Dorsolateral prefrontal cortex (tissue), 120 donors: ENCODE measurements at regions of chr10 and their contacts with region 1.

Region 1: GRCh38 chr10:121598207-121598862 is at the start of gene FGFR2:
- DNase-seq: peak; percentile 18 to 85 (median 66)
- H3K4me3 ChIP-seq: peak within 1 kb of the TSS; percentile 49 to 88 (median 75)
- H3K27ac ChIP-seq: peak within 1 kb of the TSS; percentile 83 to 99 (median 96)
- H3K27me3 ChIP-seq: peaks cover 0 to 24% (median 2%) of the 10 kb centered on the region in 45 donors
- CTCF ChIP-seq: peak in 37 of 56 donors; percentile 4 to 60 (median 31)
- total RNA-seq, gene FGFR2: 69.8 to 487 (median 136) TPM

Region 2: DNA sequence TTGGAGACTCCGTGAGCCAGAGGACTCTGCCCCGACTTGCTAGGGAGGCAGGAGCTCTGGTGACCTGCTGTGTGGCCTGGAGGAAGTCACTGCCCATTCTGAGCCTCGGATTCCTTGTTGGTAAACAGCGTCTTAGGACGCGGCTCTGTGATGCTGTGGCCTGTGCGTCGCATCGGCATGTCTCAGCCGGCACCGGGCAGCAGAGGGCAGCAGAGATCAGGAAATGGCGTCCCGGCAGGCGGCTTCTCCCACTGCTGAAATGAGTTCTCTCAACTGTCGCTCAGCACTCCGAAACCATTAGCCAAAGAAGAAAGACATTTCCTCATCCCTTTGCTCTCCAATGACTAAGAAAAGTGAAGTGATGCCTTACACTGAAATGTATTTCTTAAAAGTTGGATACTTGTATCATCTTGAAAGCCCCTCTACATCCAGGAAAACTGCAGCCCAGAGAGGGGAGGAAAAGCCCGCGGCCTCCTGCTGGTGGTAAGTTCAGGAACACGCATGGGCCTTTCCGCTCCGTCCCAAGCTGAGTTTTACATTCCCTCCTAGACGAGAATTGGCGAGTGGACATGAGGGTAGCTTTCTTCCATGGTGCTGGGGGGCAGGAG is 655.4 kb before region 1 on chr10:
- intact Hi-C with region 1: loop called in 1 of 2 experiments (anchors 2 kb)
- DNase-seq: peak; percentile 72 to 91 (median 86)
- H3K4me3 ChIP-seq: peak overlapping the region in 25 of 59 donors; percentile 5 to 41 (median 24)
- H3K27ac ChIP-seq: peak overlapping the region in 53 of 59 donors; percentile 4 to 99 (median 77)
- H3K27me3 ChIP-seq: no peaks in the 10 kb centered on the region
- CTCF ChIP-seq: peak; percentile 49 to 99 (median 94)

Region 3: DNA sequence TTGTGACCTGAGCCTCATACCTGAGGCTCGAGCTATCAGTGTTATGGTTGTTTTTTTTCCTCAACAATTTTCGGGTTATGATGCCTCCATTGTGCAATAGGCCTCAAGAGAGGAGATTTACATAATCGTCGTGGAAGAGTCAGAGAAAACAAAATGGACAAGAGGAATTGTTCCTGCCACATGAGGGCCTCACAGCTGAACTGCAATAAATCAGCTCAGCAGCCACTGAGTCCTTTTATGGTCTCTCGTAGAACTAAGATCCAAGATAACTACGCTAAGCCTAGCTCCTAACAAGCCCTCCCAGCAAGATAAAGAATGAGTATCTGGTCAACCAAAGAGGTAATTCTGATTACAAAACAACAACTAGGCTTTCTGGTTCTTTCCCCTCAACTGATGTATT is 410.3 kb before region 1 on chr10:
- intact Hi-C with region 1: loop called in 1 of 2 experiments (anchors 5 kb)
- DNase-seq: peak in 2 of 10 donors; percentile 41 to 48
- H3K4me3 ChIP-seq: no peak overlapping the region
- H3K27ac ChIP-seq: peak overlapping the region in 46 of 59 donors; percentile 1 to 89 (median 79)
- H3K27me3 ChIP-seq: no peaks in the 10 kb centered on the region
- CTCF ChIP-seq: peak in 52 of 56 donors; percentile 16 to 67 (median 42)

Region 4: DNA sequence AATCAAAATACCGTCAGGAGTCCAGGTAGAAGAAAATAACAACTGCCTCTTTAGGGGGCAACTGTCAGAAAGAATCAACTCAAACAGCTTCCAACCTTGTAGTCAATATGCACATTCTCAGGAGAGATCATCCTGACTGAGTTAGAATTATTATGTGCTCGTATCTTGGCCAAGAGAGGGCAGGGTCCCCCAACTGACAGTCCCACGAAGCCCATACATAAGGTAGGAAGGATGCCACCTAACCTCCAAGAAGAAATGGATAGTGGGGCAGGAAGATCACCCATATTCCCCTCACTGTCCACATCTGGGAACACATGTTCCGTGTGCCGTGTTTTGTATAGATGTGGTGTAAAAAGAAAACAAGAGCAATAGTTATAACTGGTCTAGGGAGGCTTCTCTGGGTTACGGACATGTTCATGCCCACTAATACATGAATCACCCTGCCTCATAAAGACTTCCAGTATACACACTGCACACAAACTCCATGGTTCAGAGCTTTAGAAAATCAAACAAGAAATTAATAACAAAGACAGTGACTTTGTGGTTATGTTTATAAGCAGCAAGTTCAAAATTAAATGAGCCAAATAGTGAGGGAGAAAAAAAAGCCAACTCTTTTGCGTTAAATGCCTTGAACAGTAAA is 295.7 kb before region 1 on chr10:
- intact Hi-C with region 1: loop called (anchors 10 kb)
- DNase-seq: no peak
- H3K4me3 ChIP-seq: no peak overlapping the region
- H3K27ac ChIP-seq: no peak overlapping the region
- H3K27me3 ChIP-seq: no peaks in the 10 kb centered on the region
- CTCF ChIP-seq: peak in 1 of 56 donors; percentile 9

Region 5: GRCh38 chr10:121437596-121437995 is 160.7 kb before region 1 on chr10:
- intact Hi-C with region 1: loop called (anchors 2 to 5 kb)
- DNase-seq: peak in 9 of 10 donors; percentile 8 to 64 (median 57)
- H3K4me3 ChIP-seq: no peak overlapping the region
- H3K27ac ChIP-seq: peak overlapping the region in 58 of 59 donors; percentile 45 to 94 (median 83)
- H3K27me3 ChIP-seq: no peaks in the 10 kb centered on the region
- CTCF ChIP-seq: peak in 4 of 56 donors; percentile 9 to 29 (median 22)

Region 6: GRCh38 chr10:121536310-121536913 is 61.9 kb before region 1 on chr10:
- intact Hi-C with region 1: loop called (anchors 2 to 5 kb)
- DNase-seq: peak in 5 of 10 donors; percentile 58 to 86 (median 61)
- H3K4me3 ChIP-seq: peak overlapping the region in 1 of 59 donors; percentile 10
- H3K27ac ChIP-seq: peak overlapping the region; percentile 65 to 100 (median 96)
- H3K27me3 ChIP-seq: no peaks in the 10 kb centered on the region
- CTCF ChIP-seq: peak in 4 of 56 donors; percentile 9 to 23 (median 12)

Region 7: GRCh38 chr10:121741248-121741792 is 143.0 kb after region 1 on chr10:
- intact Hi-C with region 1: no loop called
- DNase-seq: no peak
- H3K4me3 ChIP-seq: no peak overlapping the region
- H3K27ac ChIP-seq: no peak overlapping the region
- H3K27me3 ChIP-seq: no peaks in the 10 kb centered on the region
- CTCF ChIP-seq: no peak

Region 8: DNA sequence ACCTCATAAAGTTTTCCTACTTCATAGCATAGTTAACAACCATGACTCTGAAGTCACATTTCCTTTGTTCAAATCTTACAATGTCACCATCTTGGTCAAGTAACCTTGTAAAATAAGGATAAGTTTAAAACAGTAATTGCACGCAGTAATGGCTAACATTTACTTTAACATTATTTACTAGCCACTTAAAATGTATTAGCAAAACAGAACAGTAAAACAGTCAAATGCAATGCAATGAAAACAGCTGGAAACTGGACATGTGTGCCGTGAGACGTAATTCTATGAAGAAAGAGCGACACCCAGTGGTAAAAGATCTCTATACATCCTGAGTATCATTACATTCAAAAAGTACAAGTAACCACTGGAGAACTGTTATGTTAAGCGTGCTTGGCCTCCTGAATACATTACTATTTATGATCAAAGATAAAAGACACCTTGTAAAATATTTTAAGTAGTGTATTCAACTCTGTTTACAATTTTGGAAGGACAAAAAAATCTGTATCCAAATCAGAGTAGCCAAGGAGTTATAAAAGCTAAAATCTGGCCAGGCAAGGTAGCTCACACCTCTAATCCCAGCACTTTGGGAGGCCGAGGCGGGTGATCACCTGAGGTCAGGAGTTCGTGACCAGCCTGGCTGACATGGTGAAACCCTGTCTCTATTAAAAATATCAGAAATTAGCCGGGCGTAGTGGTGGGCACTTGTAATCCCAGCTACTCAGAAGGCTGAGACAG is 302.3 kb after region 1 on chr10:
- intact Hi-C with region 1: loop called (anchors 5 to 10 kb)
- DNase-seq: no peak
- H3K4me3 ChIP-seq: no peak overlapping the region
- H3K27ac ChIP-seq: peak overlapping the region in 11 of 59 donors; percentile 1 to 52 (median 34)
- H3K27me3 ChIP-seq: no peaks in the 10 kb centered on the region
- CTCF ChIP-seq: peak; percentile 59 to 95 (median 81)